ENCODE measurements at regions of chr11 and their contacts with region 1.

Region 1: GRCh38 chr11:44611687-44612434 is 46.4 kb downstream of the CD82 start:
- DNase-seq: peak; percentile 87
- ATAC-seq: peak; percentile 79
- H3K4me3 Mint-ChIP-seq: no peak overlapping the region
- H3K27ac Mint-ChIP-seq: peak overlapping the region; percentile 85
- H3K4me1 Mint-ChIP-seq: peaks cover 87% of the 10 kb centered on the region
- H3K27me3 Mint-ChIP-seq: no peaks in the 10 kb centered on the region

Region 2: DNA sequence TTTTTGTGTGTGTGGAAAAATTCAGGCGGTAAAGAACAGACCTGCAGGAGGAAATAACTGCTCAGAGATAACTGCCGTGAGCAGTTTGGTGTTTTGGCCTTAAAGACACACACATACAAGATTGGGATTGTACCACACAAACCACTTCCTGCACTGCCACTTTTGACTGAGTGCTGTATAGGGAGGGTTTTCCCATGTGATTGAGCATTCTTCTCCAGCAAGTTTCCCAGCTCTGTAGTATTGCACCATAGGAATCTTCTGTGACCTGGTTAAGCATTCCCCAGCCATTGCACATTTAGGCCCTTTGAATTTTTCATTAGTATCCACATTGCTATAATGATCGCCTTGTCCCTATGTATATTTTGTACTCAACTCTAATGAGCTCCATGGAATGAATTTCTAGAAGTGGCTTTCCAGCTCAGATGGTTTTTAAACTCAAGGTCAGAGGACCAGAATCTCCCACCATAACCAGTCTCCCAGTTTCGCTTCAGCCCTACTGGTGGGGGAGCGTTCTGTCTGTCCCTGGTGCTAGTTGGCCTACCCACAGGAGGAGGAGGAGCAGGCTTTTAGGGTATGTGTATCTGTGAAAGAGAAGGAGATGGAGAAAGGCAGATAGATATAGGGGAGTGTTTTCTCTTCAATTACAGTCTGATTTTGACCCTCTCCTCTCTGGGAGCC is 37.1 kb before region 1 on chr11:
- CTCF ChIA-PET with region 1: interaction called, 21 read pairs
- DNase-seq: peak; percentile 85
- ATAC-seq: peak; percentile 78
- H3K4me3 Mint-ChIP-seq: peak overlapping the region; percentile 15
- H3K27ac Mint-ChIP-seq: peak overlapping the region; percentile 95
- H3K4me1 Mint-ChIP-seq: peaks cover 86% of the 10 kb centered on the region
- H3K27me3 Mint-ChIP-seq: no peaks in the 10 kb centered on the region

Region 3: GRCh38 chr11:44596525-44597276 is 15.2 kb before region 1 on chr11:
- CTCF ChIA-PET with region 1: interaction called, 16 read pairs
- DNase-seq: peak; percentile 79
- ATAC-seq: peak; percentile 77
- H3K4me3 Mint-ChIP-seq: peak overlapping the region; percentile 43
- H3K27ac Mint-ChIP-seq: peak overlapping the region; percentile 92
- H3K4me1 Mint-ChIP-seq: peaks cover 40% of the 10 kb centered on the region
- H3K27me3 Mint-ChIP-seq: no peaks in the 10 kb centered on the region

Measured in activated CD8-positive, alpha-beta memory T cell treated with anti-CD3 and anti-CD28 coated beads, Interleukin-2, amount 10 ng/mL, durations not matched to agents 7 days and 5 days (primary cell).